Thyroid gland (tissue), 4 donors: ENCODE measurements at regions of chr6 and their contacts with region 1.

Region 1: DNA sequence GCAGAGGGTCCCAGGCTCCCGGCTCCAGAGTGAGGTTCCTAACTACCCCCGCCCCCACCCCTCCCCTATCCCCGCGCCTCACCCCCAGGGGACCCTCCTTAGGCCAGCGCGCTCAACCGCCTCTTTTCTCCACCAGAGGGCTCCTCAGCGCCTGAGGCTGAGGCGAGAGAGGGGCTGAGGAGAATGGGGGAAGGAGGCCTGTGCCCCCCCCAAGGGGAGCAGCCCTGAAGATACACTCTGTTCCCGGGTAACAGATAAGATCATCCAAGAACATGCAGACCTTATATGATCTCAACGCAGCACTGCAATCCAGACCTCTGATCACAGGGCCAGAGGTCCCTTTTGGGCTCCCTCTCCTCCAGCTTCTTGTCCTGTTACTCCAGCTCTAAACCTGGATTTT is 43.3 kb upstream of the MRPS10 start:
- DNase-seq: peak; percentile 23 to 29
- H3K4me3 ChIP-seq: no peak overlapping the region
- H3K27ac ChIP-seq: no peak overlapping the region
- H3K4me1 ChIP-seq: peaks cover 0 to 12% of the 10 kb centered on the region in 2 donors
- H3K27me3 ChIP-seq: no peaks in the 10 kb centered on the region
- CTCF ChIP-seq: peak in 5 of 6 experiments; percentile 21 to 65 (median 42)
- POLR2A ChIP-seq: no peak

Region 2: DNA sequence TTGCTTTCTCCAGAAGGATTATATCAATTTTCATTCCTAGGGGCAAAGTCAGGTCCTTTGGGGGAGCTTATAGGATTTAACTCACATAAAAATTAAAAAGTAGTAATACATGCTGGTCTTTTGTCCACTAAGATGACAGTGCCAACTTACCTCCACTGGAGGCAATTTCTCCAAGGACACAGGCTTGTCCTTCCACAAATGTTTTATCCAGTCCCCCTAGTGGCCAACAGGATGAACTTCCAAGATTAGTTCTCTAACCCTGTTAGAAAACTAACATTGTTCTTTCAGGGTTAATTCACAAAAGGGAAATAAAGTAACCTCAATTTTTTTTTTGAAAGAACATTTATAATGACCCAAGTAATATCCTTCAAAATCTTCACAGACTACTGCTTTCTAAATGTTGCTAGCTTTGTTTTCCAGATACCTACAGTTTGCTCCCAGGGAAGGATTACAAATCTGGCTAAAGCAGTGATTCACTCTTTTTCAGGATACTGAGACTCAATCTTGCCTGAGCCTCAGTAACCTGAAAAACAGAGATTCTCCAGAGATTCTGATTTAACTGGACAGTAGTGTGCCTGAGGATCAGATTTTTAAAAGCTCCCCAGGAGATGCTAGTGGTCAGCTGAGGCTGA is 271.2 kb after region 1 on chr6:
- intact Hi-C with region 1: loop called (anchors 5 kb)
- DNase-seq: peak; percentile 12 to 22
- H3K4me3 ChIP-seq: no peak overlapping the region
- H3K27ac ChIP-seq: no peak overlapping the region
- H3K4me1 ChIP-seq: no peaks in the 10 kb centered on the region
- H3K27me3 ChIP-seq: no peaks in the 10 kb centered on the region
- CTCF ChIP-seq: peak; percentile 65 to 97 (median 81)
- POLR2A ChIP-seq: no peak

Region 3: DNA sequence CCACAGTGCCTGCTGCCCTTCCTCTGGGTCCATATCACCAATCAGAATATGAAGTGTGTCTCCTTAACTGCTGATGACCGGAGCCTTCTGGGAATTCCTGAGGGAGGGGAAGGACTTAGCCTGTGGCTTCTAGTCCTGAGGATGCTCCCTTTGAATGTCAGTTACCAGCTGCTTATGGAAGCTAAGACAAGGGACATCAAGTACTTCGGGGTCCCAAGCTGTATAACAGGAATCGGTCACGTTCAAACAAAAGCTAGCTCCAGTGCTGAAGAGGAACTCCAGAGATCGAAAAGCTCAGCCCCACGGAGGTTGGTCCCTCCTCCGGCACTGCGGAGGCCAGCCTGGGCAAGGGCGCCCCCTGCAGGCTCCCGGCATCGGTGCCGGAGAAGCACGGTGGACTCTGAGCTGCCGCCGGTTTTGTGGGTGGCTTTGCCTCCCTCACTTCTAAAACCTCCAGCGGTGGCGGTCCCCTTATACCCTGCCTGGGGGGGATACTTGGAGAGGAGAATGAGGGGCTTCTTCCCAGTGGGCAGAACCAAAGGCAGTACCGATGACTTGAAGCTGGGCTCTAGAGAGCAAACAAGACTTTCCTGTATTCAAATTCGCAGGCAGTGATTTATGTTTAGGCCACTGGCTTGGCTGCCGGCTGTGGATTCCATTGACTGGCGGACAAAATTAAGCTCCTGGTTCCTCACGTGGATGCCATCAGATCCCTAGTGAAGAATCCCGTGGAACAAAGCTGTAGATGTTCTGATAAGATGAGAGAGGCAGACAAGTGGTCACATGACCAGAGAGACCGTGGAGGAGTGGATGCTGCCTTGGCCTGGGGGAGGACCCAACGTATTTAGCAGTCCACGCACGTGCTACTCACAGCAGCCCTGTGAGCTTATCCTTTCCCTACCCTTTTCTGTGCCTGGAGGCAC is 286.7 kb after region 1 on chr6:
- intact Hi-C with region 1: loop called (anchors 5 kb)
- DNase-seq: peak; percentile 76 to 82
- H3K4me3 ChIP-seq: peak overlapping the region in 1 of 3 donors; percentile 27
- H3K27ac ChIP-seq: peak overlapping the region in 1 of 3 donors; percentile 50
- H3K4me1 ChIP-seq: peaks cover 0 to 8% of the 10 kb centered on the region in 2 donors
- H3K27me3 ChIP-seq: no peaks in the 10 kb centered on the region
- CTCF ChIP-seq: peak; percentile 82 to 99 (median 91)
- POLR2A ChIP-seq: no peak